HEK293 (cell line): ENCODE measurements at regions of chr5 and their contacts with region 1.

Region 1: GRCh38 chr5:170603578-170604565 is 100.1 kb downstream of the KCNIP1 start:
- H3K4me3 ChIP-seq: no peak overlapping the region
- H3K27ac ChIP-seq: no peak overlapping the region
- H3K4me1 ChIP-seq: no peaks in the 10 kb centered on the region
- CTCF ChIP-seq: peak; percentile 67; the same call in 1 of the 2 replicates

Region 2: DNA sequence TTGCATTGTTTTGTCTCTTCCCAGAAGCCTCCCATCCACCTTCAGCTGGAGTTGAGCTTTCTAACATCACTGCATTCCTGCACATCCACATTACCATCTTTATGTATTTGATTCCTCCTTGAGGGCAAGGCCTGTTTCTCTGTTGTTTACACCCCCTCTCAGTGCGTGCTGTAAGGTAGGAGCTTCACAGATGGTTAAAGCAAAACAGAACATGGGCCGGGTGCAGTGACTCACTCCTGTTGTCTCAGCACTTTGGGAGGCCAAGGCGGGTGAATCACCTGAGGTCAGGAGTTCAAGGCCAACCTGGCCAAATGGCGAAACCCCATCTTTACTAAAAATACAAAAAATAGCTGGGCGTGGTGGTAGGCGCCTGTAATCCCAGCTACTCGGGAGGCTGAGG is 10.8 kb after region 1 on chr5:
- CTCF ChIA-PET with region 1: interaction called, 12 read pairs
- POLR2A ChIA-PET with region 1: no interaction called
- H3K4me3 ChIP-seq: no peak overlapping the region
- H3K27ac ChIP-seq: no peak overlapping the region
- H3K4me1 ChIP-seq: no peaks in the 10 kb centered on the region
- CTCF ChIP-seq: no peak

Region 3: DNA sequence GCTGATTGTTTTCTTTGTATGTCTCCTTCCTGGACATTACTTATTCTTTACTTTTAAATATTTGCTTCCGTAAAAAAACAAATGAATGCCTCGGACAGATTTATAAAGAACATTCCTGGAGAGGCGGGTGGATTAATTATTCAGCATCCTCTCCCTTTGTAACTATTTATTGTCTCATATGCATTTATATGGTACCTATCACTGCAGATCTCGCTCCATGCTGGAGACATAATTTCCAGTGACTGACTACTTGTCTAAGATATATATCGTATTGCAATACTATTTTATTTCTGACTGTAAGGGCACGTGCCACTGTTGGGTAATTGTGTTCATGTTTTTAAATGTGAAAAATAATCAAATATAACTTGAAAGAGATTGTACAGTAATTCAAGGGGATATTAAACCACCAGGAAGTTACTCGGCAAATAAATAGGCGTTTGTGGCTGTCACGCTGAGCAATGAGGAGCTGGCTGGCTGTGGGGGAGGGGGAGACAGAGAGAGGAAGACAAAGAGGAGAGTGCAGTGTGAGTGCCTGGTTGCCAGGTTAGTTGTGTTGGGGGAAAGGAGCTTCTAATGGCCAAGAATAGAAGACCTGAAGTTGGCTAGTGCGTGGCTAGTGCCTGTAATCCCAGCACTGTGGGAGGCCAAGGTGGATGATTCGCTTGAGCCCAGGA is 47.9 kb after region 1 on chr5:
- CTCF ChIA-PET with region 1: no interaction called
- POLR2A ChIA-PET with region 1: no interaction called
- H3K4me3 ChIP-seq: no peak overlapping the region
- H3K27ac ChIP-seq: no peak overlapping the region
- H3K4me1 ChIP-seq: no peaks in the 10 kb centered on the region
- CTCF ChIP-seq: no peak